ENCODE measurements at regions of chr2 and their contacts with region 1.

Region 1: DNA sequence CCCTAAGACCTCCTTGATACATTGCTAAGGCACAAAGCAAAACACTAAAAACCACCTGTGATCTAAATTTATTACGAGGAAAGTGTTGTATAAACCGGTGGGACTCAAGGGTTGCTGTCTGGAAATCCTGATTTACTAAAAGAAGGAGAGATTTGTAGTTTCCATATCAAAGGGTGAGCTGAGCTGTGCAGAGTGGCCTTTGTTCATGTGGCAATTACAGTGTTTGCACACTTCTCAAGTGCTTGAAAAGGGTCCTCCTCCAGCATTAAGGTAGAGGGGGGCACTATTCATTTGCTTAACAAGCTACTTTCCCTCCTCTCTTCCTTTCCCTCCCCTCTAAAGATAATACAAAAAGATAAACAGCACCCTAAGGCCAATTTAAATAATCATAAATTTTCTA is 30.5 kb upstream of the ITGA4 start:
- DNase-seq: no peak
- ATAC-seq: no peak
- H3K4me3 ChIP-seq: no peak overlapping the region
- H3K27ac ChIP-seq: no peak overlapping the region
- H3K4me1 ChIP-seq: no peaks in the 10 kb centered on the region
- H3K27me3 ChIP-seq: no peaks in the 10 kb centered on the region
- CTCF ChIP-seq: no peak

Region 2: GRCh38 chr2:180924063-180924462 is 502.6 kb before region 1 on chr2:
- CTCF ChIA-PET with region 1: no interaction called
- POLR2A ChIA-PET with region 1: no interaction called
- in situ Hi-C with region 1: no loop called
- intact Hi-C with region 1: loop called (anchors 5 kb)
- DNase-seq: no peak
- ATAC-seq: no peak
- H3K4me3 ChIP-seq: no peak overlapping the region
- H3K27ac ChIP-seq: no peak overlapping the region
- H3K4me1 ChIP-seq: no peaks in the 10 kb centered on the region
- H3K27me3 ChIP-seq: no peaks in the 10 kb centered on the region
- CTCF ChIP-seq: no peak

Region 3: GRCh38 chr2:181411105-181411849 is 15.4 kb before region 1 on chr2:
- CTCF ChIA-PET with region 1: no interaction called
- POLR2A ChIA-PET with region 1: no interaction called
- in situ Hi-C with region 1: no loop called
- intact Hi-C with region 1: no loop called
- DNase-seq: no peak
- ATAC-seq: no peak
- H3K4me3 ChIP-seq: no peak overlapping the region
- H3K27ac ChIP-seq: no peak overlapping the region
- H3K4me1 ChIP-seq: no peaks in the 10 kb centered on the region
- H3K27me3 ChIP-seq: no peaks in the 10 kb centered on the region
- CTCF ChIP-seq: no peak

Measured in Panc1 (cell line).